ENCODE measurements at regions of chr12 and their contacts with region 1.

Region 1: GRCh38 chr12:131642101-131642540 is 68.8 kb upstream of the SFSWAP start:
- DNase-seq: peak in 1 of 2 donors; percentile 48
- H3K4me3 ChIP-seq: no peak overlapping the region
- H3K27ac ChIP-seq: no peak overlapping the region
- H3K4me1 ChIP-seq: no peaks in the 10 kb centered on the region
- H3K27me3 ChIP-seq: peaks cover 0 to 47% of the 10 kb centered on the region in 2 donors
- CTCF ChIP-seq: no peak

Region 2: GRCh38 chr12:131132118-131132892 is 509.8 kb before region 1 on chr12:
- intact Hi-C with region 1: no loop called
- DNase-seq: peak; percentile 64 to 66
- H3K4me3 ChIP-seq: no peak overlapping the region
- H3K27ac ChIP-seq: no peak overlapping the region
- H3K4me1 ChIP-seq: peaks cover 0 to 11% (median 8%) of the 10 kb centered on the region in 4 donors
- H3K27me3 ChIP-seq: no peaks in the 10 kb centered on the region
- CTCF ChIP-seq: peak; percentile 63 to 70

Region 3: DNA sequence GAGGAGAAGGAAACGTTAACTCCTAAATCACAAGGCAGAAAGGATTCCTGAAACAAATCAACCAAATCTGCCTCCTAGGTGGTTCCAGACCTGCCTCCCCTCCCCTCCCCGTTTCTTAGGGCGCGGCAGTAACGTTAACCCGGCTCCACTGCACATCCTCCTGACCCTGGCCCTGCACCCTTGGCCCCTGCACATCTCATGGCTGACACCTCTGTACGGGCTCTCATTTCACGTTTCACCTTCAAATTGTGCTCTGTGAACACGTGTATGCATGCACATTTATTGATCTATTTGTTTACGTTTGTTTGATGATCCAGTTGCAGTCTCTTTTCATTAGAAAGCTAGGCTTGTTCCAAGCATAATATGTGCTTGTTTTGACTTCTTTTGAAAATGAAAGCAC is 330.4 kb before region 1 on chr12:
- intact Hi-C with region 1: loop called (anchors 5 kb)
- DNase-seq: no peak
- H3K4me3 ChIP-seq: no peak overlapping the region
- H3K27ac ChIP-seq: no peak overlapping the region
- H3K4me1 ChIP-seq: no peaks in the 10 kb centered on the region
- H3K27me3 ChIP-seq: peaks cover 0 to 25% of the 10 kb centered on the region in 2 donors
- CTCF ChIP-seq: no peak

Region 4: DNA sequence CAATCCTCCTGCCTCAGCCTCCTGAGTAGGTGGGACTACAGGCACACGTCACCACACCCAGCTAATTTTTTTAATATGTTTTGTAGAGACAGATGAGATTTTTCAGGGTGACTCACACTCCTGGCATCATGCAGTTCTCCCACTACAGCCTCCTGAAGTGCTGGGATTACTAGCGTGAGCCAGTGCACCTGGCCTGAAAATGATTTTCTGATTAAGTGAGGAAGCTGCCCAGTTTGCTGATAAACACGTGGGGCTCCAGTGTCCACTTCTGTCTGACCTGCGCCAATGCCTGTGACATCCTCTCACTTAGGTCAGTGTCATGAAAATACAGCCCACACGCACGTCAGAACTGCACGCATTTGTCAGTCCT is 31.8 kb after region 1 on chr12:
- intact Hi-C with region 1: no loop called
- DNase-seq: peak in 1 of 2 donors; percentile 25
- H3K4me3 ChIP-seq: no peak overlapping the region
- H3K27ac ChIP-seq: no peak overlapping the region
- H3K4me1 ChIP-seq: no peaks in the 10 kb centered on the region
- H3K27me3 ChIP-seq: peaks cover 0 to 23% of the 10 kb centered on the region in 2 donors
- CTCF ChIP-seq: no peak